CD8-positive, alpha-beta memory T cell (primary cell): ENCODE measurements at regions of chr14 and their contacts with region 1.

Region 1: DNA sequence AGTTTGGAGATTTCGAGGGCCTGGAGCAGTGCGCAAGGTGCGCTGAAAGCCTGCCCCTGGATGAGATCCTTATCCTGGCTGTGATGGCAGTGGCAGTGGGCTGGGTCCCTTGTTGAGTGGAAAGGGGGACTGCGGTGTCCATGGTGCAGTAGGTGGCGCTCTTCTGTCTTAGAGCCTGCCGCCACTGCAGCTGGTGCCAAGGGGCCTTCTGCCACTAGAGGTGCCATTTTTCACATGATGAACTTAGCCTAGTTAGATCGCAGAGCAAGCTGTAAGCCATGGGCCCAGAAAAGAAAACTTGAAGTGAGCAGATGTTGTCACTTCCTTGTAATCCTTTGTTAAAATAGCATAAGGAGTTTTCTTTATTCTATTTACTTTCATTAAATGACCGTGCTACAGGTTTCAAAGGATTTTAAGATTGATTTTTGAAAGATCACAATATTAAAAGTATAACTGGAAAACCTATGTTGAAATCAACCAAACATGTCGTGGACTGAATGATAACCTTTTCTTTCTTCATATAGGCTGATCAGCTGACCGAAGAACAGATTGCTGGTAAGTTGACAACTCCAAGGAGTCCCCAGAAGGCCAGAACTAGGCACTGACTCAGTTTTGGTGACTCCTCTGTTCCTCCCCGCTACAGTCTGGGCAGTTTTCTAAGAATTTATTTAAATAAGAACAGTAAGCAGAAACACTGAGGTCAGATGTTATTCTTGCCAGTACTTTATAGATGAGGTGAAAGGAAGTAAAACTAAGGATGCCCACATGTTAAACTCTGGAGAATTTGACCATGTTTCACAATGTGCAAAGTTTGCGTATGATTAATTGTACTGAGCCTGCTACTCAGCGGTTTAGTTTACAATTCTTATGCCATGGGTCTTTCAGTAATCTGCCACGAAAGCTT is 3.0 kb downstream of the CALM1 start:
- DNase-seq: peak; percentile 74 to 91 (median 83)
- H3K4me3 ChIP-seq: peak overlapping the region; percentile 72
- H3K4me3 Mint-ChIP-seq: peak overlapping the region; percentile 96 to 100 (median 100)
- H3K27ac ChIP-seq: peak overlapping the region; percentile 90
- H3K27ac Mint-ChIP-seq: peak overlapping the region; percentile 97 to 100 (median 99)
- H3K4me1 ChIP-seq: peaks cover 55% of the 10 kb centered on the region
- H3K4me1 Mint-ChIP-seq: peaks cover 66 to 71% (median 69%) of the 10 kb centered on the region in 3 donors
- H3K27me3 ChIP-seq: no peaks in the 10 kb centered on the region
- H3K27me3 Mint-ChIP-seq: peaks cover 0 to 13% of the 10 kb centered on the region in 2 donors

Region 2: GRCh38 chr14:90368946-90369721 is 30.7 kb before region 1 on chr14:
- CTCF ChIA-PET with region 1: interaction called, 11 read pairs
- POLR2A ChIA-PET with region 1: interaction called, 4 read pairs
- DNase-seq: peak in 2 of 5 donors; percentile 38 to 44
- H3K4me3 ChIP-seq: no peak overlapping the region
- H3K4me3 Mint-ChIP-seq: no peak overlapping the region
- H3K27ac ChIP-seq: no peak overlapping the region
- H3K27ac Mint-ChIP-seq: no peak overlapping the region
- H3K4me1 ChIP-seq: no peaks in the 10 kb centered on the region
- H3K4me1 Mint-ChIP-seq: peaks cover 0 to 5% (median 5%) of the 10 kb centered on the region in 3 donors
- H3K27me3 ChIP-seq: no peaks in the 10 kb centered on the region
- H3K27me3 Mint-ChIP-seq: peaks cover 0 to 3% of the 10 kb centered on the region in 2 donors

Region 3: GRCh38 chr14:90383075-90383730 is 16.6 kb before region 1 on chr14:
- CTCF ChIA-PET with region 1: interaction called, 45 read pairs
- POLR2A ChIA-PET with region 1: interaction called, 345 read pairs
- DNase-seq: peak; percentile 93 to 99 (median 97)
- H3K4me3 ChIP-seq: peak overlapping the region; percentile 88
- H3K4me3 Mint-ChIP-seq: no peak overlapping the region
- H3K27ac ChIP-seq: peak overlapping the region; percentile 99
- H3K27ac Mint-ChIP-seq: no peak overlapping the region
- H3K4me1 ChIP-seq: peaks cover 37% of the 10 kb centered on the region
- H3K4me1 Mint-ChIP-seq: peaks cover 5 to 28% (median 14%) of the 10 kb centered on the region in 3 donors
- H3K27me3 ChIP-seq: no peaks in the 10 kb centered on the region
- H3K27me3 Mint-ChIP-seq: no peaks in the 10 kb centered on the region

Region 4: DNA sequence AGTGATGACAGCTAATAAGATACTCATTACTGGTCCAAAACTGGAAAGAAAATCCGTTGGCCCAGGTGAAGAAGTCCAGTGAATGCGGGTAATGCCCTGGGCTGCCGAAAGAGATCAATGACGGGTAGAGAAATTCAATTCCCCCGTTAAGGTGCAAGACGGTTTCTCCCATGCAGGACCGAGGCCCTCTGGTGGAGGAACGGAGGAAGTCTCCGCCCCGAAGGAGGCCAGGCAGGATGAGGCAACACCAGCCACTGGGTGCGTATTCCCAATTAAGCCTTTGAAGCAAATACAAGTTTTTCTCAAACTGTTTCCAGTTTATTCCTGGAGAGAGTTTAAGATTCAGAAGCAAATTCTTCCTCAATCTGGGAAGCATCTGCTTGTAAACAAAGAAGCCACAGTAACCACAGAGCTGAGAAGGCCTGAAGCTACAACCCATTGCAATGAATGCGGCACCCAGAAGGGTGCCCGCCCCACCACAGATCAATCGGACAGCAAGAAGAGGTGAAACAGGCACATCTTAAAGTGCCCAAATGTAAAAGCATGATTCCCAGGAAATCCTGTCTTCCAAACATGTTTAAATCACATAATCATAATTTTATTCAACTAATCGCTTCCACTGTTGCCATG is 297.9 kb after region 1 on chr14:
- CTCF ChIA-PET with region 1: interaction called, 23 read pairs
- POLR2A ChIA-PET with region 1: no interaction called
- DNase-seq: peak; percentile 50 to 82 (median 53)
- H3K4me3 ChIP-seq: no peak overlapping the region
- H3K4me3 Mint-ChIP-seq: peak overlapping the region in 1 of 7 donors; percentile 15
- H3K27ac ChIP-seq: no peak overlapping the region
- H3K27ac Mint-ChIP-seq: peak overlapping the region in 1 of 8 donors; percentile 67
- H3K4me1 ChIP-seq: peaks cover 6% of the 10 kb centered on the region
- H3K4me1 Mint-ChIP-seq: peaks cover 0 to 1% (median 0%) of the 10 kb centered on the region in 3 donors
- H3K27me3 ChIP-seq: no peaks in the 10 kb centered on the region
- H3K27me3 Mint-ChIP-seq: peaks cover 0 to 5% of the 10 kb centered on the region in 2 donors

Region 5: GRCh38 chr14:90758028-90758889 is 358.5 kb after region 1 on chr14:
- CTCF ChIA-PET with region 1: interaction called, 12 read pairs
- POLR2A ChIA-PET with region 1: interaction called, 4 read pairs
- DNase-seq: peak; percentile 92 to 96 (median 93)
- H3K4me3 ChIP-seq: peak overlapping the region; percentile 79
- H3K4me3 Mint-ChIP-seq: peak overlapping the region; percentile 76 to 91 (median 83)
- H3K27ac ChIP-seq: peak overlapping the region; percentile 43
- H3K27ac Mint-ChIP-seq: peak overlapping the region in 7 of 8 donors; percentile 68 to 91 (median 83)
- H3K4me1 ChIP-seq: peaks cover 16% of the 10 kb centered on the region
- H3K4me1 Mint-ChIP-seq: peaks cover 5 to 17% (median 12%) of the 10 kb centered on the region in 3 donors
- H3K27me3 ChIP-seq: no peaks in the 10 kb centered on the region
- H3K27me3 Mint-ChIP-seq: peaks cover 5 to 21% of the 10 kb centered on the region in 2 donors

Region 6: GRCh38 chr14:91599994-91600393 is 1200.2 kb after region 1 on chr14:
- CTCF ChIA-PET with region 1: no interaction called
- POLR2A ChIA-PET with region 1: no interaction called
- DNase-seq: no peak
- H3K4me3 ChIP-seq: no peak overlapping the region
- H3K4me3 Mint-ChIP-seq: no peak overlapping the region
- H3K27ac ChIP-seq: no peak overlapping the region
- H3K27ac Mint-ChIP-seq: no peak overlapping the region
- H3K4me1 ChIP-seq: no peaks in the 10 kb centered on the region
- H3K4me1 Mint-ChIP-seq: no peaks in the 10 kb centered on the region
- H3K27me3 ChIP-seq: no peaks in the 10 kb centered on the region
- H3K27me3 Mint-ChIP-seq: peaks cover 0 to 2% of the 10 kb centered on the region in 2 donors